Mammary epithelial cell (primary cell): ENCODE measurements at regions of chr19 and their contacts with region 1.

Region 1: GRCh38 chr19:38559428-38560401 is 58.0 kb downstream of the MAP4K1 start:
- DNase-seq: peak; percentile 99
- H3K4me3 ChIP-seq: no peak overlapping the region
- H3K27ac ChIP-seq: peak overlapping the region; percentile 48
- H3K4me1 ChIP-seq: peaks cover 19% of the 10 kb centered on the region
- H3K27me3 ChIP-seq: peaks cover under 1% of the 10 kb centered on the region
- CTCF ChIP-seq: no peak

Region 2: GRCh38 chr19:38496603-38497487 is 62.9 kb before region 1 on chr19:
- CTCF ChIA-PET with region 1: no interaction called
- dilution Hi-C with region 1: no loop called
- in situ Hi-C with region 1: no loop called
- intact Hi-C with region 1: no loop called
- DNase-seq: no peak
- H3K4me3 ChIP-seq: no peak overlapping the region
- H3K27ac ChIP-seq: no peak overlapping the region
- H3K4me1 ChIP-seq: no peaks in the 10 kb centered on the region
- H3K27me3 ChIP-seq: no peaks in the 10 kb centered on the region
- CTCF ChIP-seq: no peak

Region 3: DNA sequence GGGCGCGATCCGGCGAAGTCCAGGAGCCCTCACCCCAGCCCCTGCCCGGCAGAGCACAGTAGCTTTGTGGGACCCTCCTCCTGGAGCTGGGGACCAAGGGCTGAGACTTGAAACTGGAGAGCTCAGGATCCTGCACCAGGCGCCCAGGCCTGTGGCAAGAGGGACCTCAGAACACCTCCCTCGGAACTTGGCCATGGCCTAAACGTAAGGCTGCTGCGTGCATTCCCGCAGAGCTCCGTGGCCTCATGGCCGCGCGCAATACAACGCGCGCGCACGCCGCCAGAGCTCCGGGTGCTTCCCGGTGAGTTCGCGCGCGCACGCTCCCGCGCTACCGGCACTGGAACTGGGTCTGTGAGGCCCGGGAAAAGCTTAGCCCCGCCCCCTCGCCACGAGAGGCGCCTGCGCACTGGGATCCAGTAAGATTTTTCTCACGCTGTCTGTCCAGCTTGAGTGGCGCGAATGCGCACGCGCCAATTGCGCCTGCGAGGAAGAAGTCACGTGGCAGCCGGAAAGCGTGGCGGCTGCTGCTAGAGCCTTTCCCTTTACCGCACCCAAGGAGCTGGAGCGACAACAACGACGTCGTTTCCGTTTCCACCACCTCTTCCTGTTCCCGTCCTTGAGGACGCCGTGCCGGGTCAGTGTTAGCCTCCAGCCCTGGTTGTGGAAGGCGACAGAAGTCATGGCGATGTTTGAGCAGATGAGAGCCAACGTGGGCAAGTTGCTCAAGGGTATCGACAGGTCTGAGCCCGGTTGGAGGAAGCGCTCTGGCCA is 59.1 kb after region 1 on chr19 and contains the start of gene EIF3K:
- CTCF ChIA-PET with region 1: no interaction called
- dilution Hi-C with region 1: no loop called
- in situ Hi-C with region 1: no loop called
- intact Hi-C with region 1: loop called (anchors 1 kb)
- DNase-seq: peak; percentile 98
- H3K4me3 ChIP-seq: peak within 1 kb of the TSS; percentile 80 to 90 (median 88)
- H3K27ac ChIP-seq: peak within 1 kb of the TSS; percentile 80
- H3K4me1 ChIP-seq: peaks cover 18% of the 10 kb centered on the region
- H3K27me3 ChIP-seq: no peaks in the 10 kb centered on the region
- CTCF ChIP-seq: no peak
- total RNA-seq, gene EIF3K: 237 to 319 TPM

Region 4: GRCh38 chr19:38718747-38719543 is 159.2 kb after region 1 on chr19:
- CTCF ChIA-PET with region 1: no interaction called
- dilution Hi-C with region 1: no loop called
- in situ Hi-C with region 1: no loop called
- intact Hi-C with region 1: loop called (anchors 5 kb)
- DNase-seq: peak; percentile 68
- H3K4me3 ChIP-seq: no peak overlapping the region
- H3K27ac ChIP-seq: peak overlapping the region; percentile 86
- H3K4me1 ChIP-seq: peaks cover 43% of the 10 kb centered on the region
- H3K27me3 ChIP-seq: no peaks in the 10 kb centered on the region
- CTCF ChIP-seq: peak; percentile 27 to 61

Region 5: DNA sequence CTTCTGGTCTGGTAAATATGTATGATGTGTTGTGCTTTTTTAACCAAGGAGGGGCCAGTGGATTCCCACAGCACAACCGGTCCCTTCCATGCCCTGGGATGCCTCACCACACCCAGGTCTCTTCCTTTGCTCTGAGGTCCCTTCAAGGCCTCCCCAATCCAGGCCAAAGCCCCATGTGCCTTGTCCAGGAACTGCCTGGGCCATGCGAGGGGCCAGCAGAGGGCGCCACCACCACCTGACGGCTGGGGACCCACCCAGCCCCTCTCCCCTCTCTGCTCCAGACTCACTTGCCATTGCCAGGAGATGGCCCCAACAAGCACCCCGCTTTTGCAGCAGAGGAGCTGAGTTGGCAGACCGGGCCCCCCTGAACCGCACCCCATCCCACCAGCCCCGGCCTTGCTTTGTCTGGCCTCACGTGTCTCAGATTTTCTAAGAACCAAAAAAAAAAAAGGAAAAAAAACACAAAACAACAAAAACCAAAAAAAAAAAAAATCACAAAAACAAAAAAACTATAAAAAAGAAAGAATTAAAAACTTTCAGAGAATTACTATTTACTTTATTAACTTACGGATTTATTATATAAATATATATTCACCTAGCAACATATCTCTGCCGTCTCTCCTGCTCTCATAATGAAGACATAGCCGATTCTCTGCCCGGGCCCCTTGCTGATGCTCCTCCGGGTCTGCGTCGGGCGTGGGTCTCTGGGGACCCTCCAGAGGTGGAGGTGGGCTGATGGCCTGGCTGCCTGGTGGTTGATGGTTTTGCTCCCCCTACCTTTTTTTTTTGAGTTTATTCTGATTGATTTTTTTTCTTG is 170.1 kb after region 1 on chr19:
- CTCF ChIA-PET with region 1: no interaction called
- dilution Hi-C with region 1: no loop called
- in situ Hi-C with region 1: no loop called
- intact Hi-C with region 1: no loop called
- DNase-seq: peak; percentile 43
- H3K4me3 ChIP-seq: no peak overlapping the region
- H3K27ac ChIP-seq: no peak overlapping the region
- H3K4me1 ChIP-seq: peaks cover 24% of the 10 kb centered on the region
- H3K27me3 ChIP-seq: no peaks in the 10 kb centered on the region
- CTCF ChIP-seq: peak; percentile 59 to 85

Region 6: DNA sequence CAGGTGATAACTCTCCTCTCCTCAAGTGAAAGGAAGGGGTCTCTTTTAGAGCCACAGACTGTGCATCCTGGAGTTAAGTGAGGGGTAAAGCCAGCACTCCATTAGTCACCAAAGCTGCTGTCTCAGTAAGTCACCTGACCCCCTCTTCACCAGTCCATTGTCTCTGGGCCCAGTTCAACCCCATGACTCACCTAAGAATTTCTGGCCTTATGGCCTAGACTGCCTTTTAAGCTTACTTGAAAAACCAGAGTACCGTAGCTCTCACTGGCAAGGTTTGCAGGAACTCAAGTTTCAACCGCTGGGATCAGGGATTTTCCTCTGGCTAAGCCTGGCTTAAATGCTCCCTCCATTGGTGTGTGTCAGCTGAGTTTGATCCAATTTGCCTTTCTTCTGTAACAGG is 1003.7 kb after region 1 on chr19:
- CTCF ChIA-PET with region 1: no interaction called
- dilution Hi-C with region 1: no loop called
- in situ Hi-C with region 1: no loop called
- intact Hi-C with region 1: no loop called
- DNase-seq: peak; percentile 64
- H3K4me3 ChIP-seq: no peak overlapping the region
- H3K27ac ChIP-seq: no peak overlapping the region
- H3K4me1 ChIP-seq: no peaks in the 10 kb centered on the region
- H3K27me3 ChIP-seq: no peaks in the 10 kb centered on the region
- CTCF ChIP-seq: no peak